Sigmoid colon (tissue), 7 donors: ENCODE measurements at regions of chr3 and their contacts with region 1.

Region 1: GRCh38 chr3:139427283-139427993 is 38.0 kb upstream of the COPB2 start:
- DNase-seq: no peak
- H3K4me3 ChIP-seq: no peak overlapping the region
- H3K27ac ChIP-seq: no peak overlapping the region
- H3K4me1 ChIP-seq: no peaks in the 10 kb centered on the region
- H3K27me3 ChIP-seq: no peaks in the 10 kb centered on the region
- CTCF ChIP-seq: peak; percentile 61 to 75 (median 68)
- EP300 ChIP-seq: no peak
- POLR2A ChIP-seq: no peak

Region 2: DNA sequence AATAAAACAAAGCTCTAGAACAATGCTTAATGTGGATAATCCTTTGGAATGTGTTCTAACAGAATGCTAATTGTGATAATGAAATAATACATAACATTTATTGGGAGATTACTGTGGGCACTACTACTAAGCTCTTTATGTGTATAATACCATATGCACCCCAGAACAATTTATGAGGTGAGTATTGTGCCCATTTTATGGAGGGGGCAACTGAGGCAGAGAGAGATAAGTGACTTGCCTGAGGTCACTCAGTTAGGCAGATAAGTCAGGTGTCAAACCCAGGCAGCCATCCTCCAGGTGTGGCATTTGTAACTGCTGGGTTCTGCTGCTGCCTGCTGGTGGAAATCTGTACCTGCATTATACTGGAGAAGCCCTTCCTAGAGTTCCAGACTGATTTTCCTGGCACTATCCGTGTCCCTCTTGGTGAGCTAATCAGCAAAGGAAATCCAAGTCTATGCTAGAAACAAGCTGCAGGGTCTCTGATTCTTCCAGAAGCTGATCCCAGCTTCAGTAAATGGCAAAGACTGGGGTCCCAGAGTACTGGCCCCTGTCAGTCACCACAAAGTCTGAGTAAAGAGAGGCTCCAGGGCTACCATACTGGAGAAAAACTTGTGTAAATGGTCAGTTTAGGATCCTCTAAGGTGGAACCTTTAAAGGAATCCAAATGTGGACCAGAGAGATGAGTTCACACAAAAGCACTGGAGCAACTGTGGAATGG is 134.7 kb after region 1 on chr3:
- intact Hi-C with region 1: loop called (anchors 5 kb)
- DNase-seq: no peak
- H3K4me3 ChIP-seq: no peak overlapping the region
- H3K27ac ChIP-seq: no peak overlapping the region
- H3K4me1 ChIP-seq: no peaks in the 10 kb centered on the region
- H3K27me3 ChIP-seq: no peaks in the 10 kb centered on the region
- CTCF ChIP-seq: peak in 3 of 4 experiments; percentile 44 to 47 (median 46)
- EP300 ChIP-seq: no peak
- POLR2A ChIP-seq: no peak

Region 3: GRCh38 chr3:140736863-140737460 is 1309.5 kb after region 1 on chr3:
- intact Hi-C with region 1: loop called (anchors 5 kb)
- DNase-seq: no peak
- H3K4me3 ChIP-seq: no peak overlapping the region
- H3K27ac ChIP-seq: no peak overlapping the region
- H3K4me1 ChIP-seq: no peaks in the 10 kb centered on the region
- H3K27me3 ChIP-seq: no peaks in the 10 kb centered on the region
- CTCF ChIP-seq: peak in 3 of 4 experiments; percentile 8 to 19 (median 12)
- EP300 ChIP-seq: no peak
- POLR2A ChIP-seq: no peak

Region 4: GRCh38 chr3:140863580-140864009 is 1436.2 kb after region 1 on chr3:
- intact Hi-C with region 1: loop called (anchors 5 kb)
- DNase-seq: no peak
- H3K4me3 ChIP-seq: no peak overlapping the region
- H3K27ac ChIP-seq: no peak overlapping the region
- H3K4me1 ChIP-seq: no peaks in the 10 kb centered on the region
- H3K27me3 ChIP-seq: no peaks in the 10 kb centered on the region
- CTCF ChIP-seq: peak in 2 of 4 experiments; percentile 10 to 39
- EP300 ChIP-seq: no peak
- POLR2A ChIP-seq: no peak